Naive thymus-derived CD4-positive, alpha-beta T cell (primary cell): ENCODE measurements at regions of chr13 and their contacts with region 1.

Region 1: GRCh38 chr13:42039946-42040729 is 8.3 kb upstream of the DGKH start:
- DNase-seq: peak; percentile 67 to 87 (median 79)
- ATAC-seq: peak; percentile 92
- H3K4me3 ChIP-seq: peak overlapping the region; percentile 70
- H3K4me3 Mint-ChIP-seq: peak overlapping the region; percentile 83 to 95 (median 90)
- H3K27ac ChIP-seq: peak overlapping the region; percentile 73
- H3K27ac Mint-ChIP-seq: peak overlapping the region; percentile 29 to 91 (median 84)
- H3K4me1 ChIP-seq: peaks cover 7 to 8% of the 10 kb centered on the region in 2 donors
- H3K4me1 Mint-ChIP-seq: peaks cover 7 to 22% (median 20%) of the 10 kb centered on the region in 7 donors
- H3K27me3 ChIP-seq: no peaks in the 10 kb centered on the region
- H3K27me3 Mint-ChIP-seq: peaks cover 0 to 58% (median 0%) of the 10 kb centered on the region in 5 donors

Region 2: GRCh38 chr13:41132512-41133152 is 907.5 kb before region 1 on chr13 and contains the start of gene KBTBD6:
- CTCF ChIA-PET with region 1: interaction called, 3 read pairs
- POLR2A ChIA-PET with region 1: no interaction called
- intact Hi-C with region 1: loop called (anchors 5 kb)
- DNase-seq: peak; percentile 76 to 93 (median 87)
- ATAC-seq: peak; percentile 98
- H3K4me3 ChIP-seq: peak within 1 kb of the TSS; percentile 77
- H3K4me3 Mint-ChIP-seq: peak within 1 kb of the TSS; percentile 94 to 99 (median 98)
- H3K27ac ChIP-seq: peak within 1 kb of the TSS; percentile 67
- H3K27ac Mint-ChIP-seq: peak within 1 kb of the TSS; percentile 91 to 97 (median 93)
- H3K4me1 ChIP-seq: peaks cover 15 to 24% of the 10 kb centered on the region in 2 donors
- H3K4me1 Mint-ChIP-seq: peaks cover 32 to 60% (median 54%) of the 10 kb centered on the region in 7 donors
- H3K27me3 ChIP-seq: no peaks in the 10 kb centered on the region
- H3K27me3 Mint-ChIP-seq: no peaks in the 10 kb centered on the region
- total RNA-seq, gene KBTBD6: 3.9 to 9.2 (median 7.7) TPM

Region 3: DNA sequence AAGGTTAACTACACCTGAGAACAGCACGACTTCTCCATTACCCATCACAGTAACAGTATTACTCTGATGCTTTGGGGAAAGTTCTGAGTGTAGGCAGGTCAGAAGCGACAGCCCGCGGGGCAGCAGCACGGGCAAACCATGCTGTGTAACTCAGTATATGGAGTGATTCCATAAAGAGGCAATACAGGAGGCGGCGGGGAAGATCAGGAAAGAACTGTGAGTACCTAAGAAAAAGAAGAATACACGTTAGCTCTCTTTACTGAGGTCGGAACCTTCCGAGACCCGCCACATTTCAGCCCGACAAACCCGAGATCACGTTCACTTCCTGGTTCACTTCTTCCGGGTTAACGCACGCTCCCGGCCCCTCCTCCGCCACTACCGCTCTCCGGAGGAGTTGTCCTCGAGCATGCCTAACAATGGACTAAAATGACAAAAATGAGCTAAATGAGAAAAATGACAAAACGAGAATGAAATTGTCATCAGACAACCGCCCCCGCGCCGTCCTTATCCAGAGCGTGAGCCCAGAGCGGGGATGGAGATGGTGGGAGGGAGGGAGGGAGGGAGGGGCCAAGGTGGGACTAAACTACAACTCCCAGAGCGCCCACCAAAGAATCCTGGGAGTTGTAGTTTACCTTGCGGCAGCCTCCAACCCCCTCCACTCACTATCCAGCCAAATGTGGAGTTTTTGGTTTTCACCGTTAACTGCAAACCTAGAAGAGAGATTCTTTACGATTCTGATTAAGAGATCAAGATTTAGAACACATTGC is 776.7 kb before region 1 on chr13 and contains the start of gene MTRF1:
- CTCF ChIA-PET with region 1: no interaction called
- POLR2A ChIA-PET with region 1: no interaction called
- intact Hi-C with region 1: loop called in 1 of 2 experiments (anchors 2 kb)
- DNase-seq: peak; percentile 70 to 91 (median 88)
- ATAC-seq: peak; percentile 94
- H3K4me3 ChIP-seq: peak within 1 kb of the TSS; percentile 76
- H3K4me3 Mint-ChIP-seq: peak within 1 kb of the TSS; percentile 84 to 100 (median 96)
- H3K27ac ChIP-seq: peak within 1 kb of the TSS; percentile 79
- H3K27ac Mint-ChIP-seq: peak within 1 kb of the TSS; percentile 92 to 99 (median 96)
- H3K4me1 ChIP-seq: peaks cover 0 to 3% of the 10 kb centered on the region in 2 donors
- H3K4me1 Mint-ChIP-seq: peaks cover 10 to 61% (median 28%) of the 10 kb centered on the region in 7 donors
- H3K27me3 ChIP-seq: no peaks in the 10 kb centered on the region
- H3K27me3 Mint-ChIP-seq: no peaks in the 10 kb centered on the region
- total RNA-seq, gene MTRF1: 21.7 to 38.2 (median 30.9) TPM

Region 4: DNA sequence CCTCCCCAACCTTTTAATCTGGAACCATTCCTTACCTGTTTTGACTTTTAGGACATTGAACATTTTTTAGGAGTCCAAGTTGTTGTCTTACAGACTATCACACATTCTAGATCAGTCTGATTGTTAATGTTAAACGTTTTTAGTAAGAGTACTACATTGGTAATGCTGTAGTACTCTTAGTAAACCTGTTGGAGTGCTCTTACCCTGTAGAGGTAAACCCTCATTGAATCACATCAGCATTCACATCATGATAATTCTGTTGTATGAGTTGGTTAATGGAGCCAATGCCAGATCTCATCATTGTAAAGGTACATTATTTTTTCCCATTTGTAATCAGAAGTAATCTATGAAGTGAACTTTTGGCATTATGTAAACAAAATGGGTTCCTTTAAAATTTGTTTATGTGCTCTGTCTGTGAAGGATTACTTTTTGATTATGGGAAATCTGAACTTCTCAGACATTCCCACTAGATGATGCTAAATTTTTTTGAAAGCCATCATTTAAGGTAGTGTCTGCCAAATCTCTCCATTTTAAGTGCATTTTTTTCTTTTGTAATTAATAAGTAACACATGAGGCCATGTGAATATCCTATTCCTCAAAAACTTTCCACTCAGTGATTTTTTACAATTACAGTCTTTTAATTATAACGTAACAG is 134.4 kb before region 1 on chr13:
- CTCF ChIA-PET with region 1: no interaction called
- POLR2A ChIA-PET with region 1: no interaction called
- intact Hi-C with region 1: loop called in 1 of 2 experiments (anchors 5 kb)
- DNase-seq: peak in 6 of 9 donors; percentile 6 to 45 (median 26)
- ATAC-seq: peak; percentile 92
- H3K4me3 ChIP-seq: no peak overlapping the region
- H3K4me3 Mint-ChIP-seq: no peak overlapping the region
- H3K27ac ChIP-seq: no peak overlapping the region
- H3K27ac Mint-ChIP-seq: no peak overlapping the region
- H3K4me1 ChIP-seq: no peaks in the 10 kb centered on the region
- H3K4me1 Mint-ChIP-seq: peaks cover 0 to 12% (median 3%) of the 10 kb centered on the region in 7 donors
- H3K27me3 ChIP-seq: no peaks in the 10 kb centered on the region
- H3K27me3 Mint-ChIP-seq: no peaks in the 10 kb centered on the region

Region 5: GRCh38 chr13:41916173-41916954 is 123.8 kb before region 1 on chr13:
- CTCF ChIA-PET with region 1: no interaction called
- POLR2A ChIA-PET with region 1: no interaction called
- intact Hi-C with region 1: loop called (anchors 2 to 5 kb)
- DNase-seq: peak in 5 of 9 donors; percentile 15 to 47 (median 30)
- ATAC-seq: peak; percentile 76
- H3K4me3 ChIP-seq: no peak overlapping the region
- H3K4me3 Mint-ChIP-seq: peak overlapping the region in 9 of 10 donors; percentile 26 to 81 (median 57)
- H3K27ac ChIP-seq: no peak overlapping the region
- H3K27ac Mint-ChIP-seq: peak overlapping the region in 7 of 9 donors; percentile 0 to 87 (median 47)
- H3K4me1 ChIP-seq: peaks cover 11 to 15% of the 10 kb centered on the region in 2 donors
- H3K4me1 Mint-ChIP-seq: peaks cover 26 to 65% (median 44%) of the 10 kb centered on the region in 7 donors
- H3K27me3 ChIP-seq: no peaks in the 10 kb centered on the region
- H3K27me3 Mint-ChIP-seq: no peaks in the 10 kb centered on the region

Region 6: DNA sequence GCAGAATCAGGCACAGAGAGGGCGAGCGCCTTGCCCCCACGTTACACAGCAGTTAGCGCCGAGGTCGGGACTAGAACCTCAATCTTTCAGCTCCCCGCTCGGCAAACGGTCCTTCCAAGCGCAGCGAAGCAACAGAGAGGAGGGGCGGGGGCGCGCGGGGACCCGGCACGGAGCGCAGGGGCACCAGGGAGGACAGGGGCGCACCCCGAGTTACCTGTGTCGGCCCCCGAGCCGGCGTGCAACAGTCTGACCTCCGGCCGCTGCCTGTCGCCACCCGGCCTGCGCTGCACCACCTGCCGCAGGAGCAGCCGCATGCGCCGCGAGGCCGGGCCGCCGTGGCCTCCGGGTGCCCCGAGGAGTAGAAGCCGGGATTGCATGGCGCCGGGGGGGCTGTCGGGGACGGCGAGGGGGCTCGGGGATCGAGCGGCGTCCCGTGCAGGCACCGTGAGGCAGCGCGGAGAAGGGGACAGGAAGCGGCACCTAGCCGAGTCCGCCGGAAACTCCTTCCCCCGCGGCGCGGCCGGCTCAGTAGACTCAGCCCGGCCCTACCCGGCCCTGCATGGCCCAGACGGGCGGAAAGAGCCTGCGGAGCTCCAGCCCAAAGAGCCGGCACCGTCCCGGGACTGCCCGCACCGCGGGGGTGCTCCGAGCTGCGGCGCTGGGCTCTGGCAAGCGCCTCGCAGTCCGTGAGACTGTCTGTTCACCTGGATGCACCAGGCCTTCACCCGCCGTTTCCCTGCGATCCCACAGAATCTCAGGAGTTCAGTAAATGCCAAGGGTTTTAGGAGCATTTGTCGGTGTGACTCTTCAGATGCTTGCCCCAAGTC is 79.3 kb before region 1 on chr13 and contains the start of gene VWA8:
- CTCF ChIA-PET with region 1: no interaction called
- POLR2A ChIA-PET with region 1: interaction called, 3 read pairs
- intact Hi-C with region 1: loop called (anchors 1 to 2 kb)
- DNase-seq: peak; percentile 75 to 86 (median 84)
- ATAC-seq: peak; percentile 97
- H3K4me3 ChIP-seq: peak within 1 kb of the TSS; percentile 86
- H3K4me3 Mint-ChIP-seq: peak within 1 kb of the TSS; percentile 92 to 97 (median 94)
- H3K27ac ChIP-seq: peak within 1 kb of the TSS; percentile 84
- H3K27ac Mint-ChIP-seq: peak within 1 kb of the TSS; percentile 88 to 99 (median 95)
- H3K4me1 ChIP-seq: peaks cover 14 to 16% of the 10 kb centered on the region in 2 donors
- H3K4me1 Mint-ChIP-seq: peaks cover 19 to 63% (median 43%) of the 10 kb centered on the region in 7 donors
- H3K27me3 ChIP-seq: no peaks in the 10 kb centered on the region
- H3K27me3 Mint-ChIP-seq: peaks cover 0 to 2% (median 0%) of the 10 kb centered on the region in 5 donors
- total RNA-seq, gene VWA8: 16.8 to 26.3 (median 21.8) TPM

Region 7: DNA sequence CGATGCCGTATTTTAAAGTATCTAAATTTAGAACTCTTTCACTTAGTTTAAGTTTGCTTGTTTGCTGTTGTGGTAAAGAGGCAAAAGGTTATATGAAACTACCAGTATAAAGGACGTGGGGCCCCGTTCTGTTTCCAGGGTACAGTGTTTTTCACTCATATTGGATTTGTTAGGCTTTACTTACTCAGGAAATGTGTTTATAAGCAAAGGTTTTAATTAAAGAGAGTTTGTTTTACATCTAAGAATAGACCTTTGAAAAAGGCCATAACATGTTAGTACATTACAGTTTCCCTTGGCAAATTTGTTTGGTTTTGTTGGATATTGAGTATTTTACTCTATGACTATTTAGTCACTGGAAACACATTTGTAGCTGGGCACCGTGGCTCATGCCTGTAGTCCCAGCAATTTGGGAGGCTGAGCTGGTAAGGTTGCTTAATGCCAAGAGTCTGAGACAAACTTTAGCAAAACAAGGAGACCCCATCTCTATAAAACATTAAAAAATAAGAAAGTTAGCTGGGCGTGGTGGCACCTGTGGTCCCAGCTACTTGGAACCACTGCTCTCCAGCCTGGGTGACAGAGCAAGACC is 15.5 kb after region 1 on chr13:
- CTCF ChIA-PET with region 1: no interaction called
- POLR2A ChIA-PET with region 1: no interaction called
- intact Hi-C with region 1: loop called in 1 of 2 experiments (anchors 2 kb)
- DNase-seq: no peak
- ATAC-seq: no peak
- H3K4me3 ChIP-seq: no peak overlapping the region
- H3K4me3 Mint-ChIP-seq: no peak overlapping the region
- H3K27ac ChIP-seq: no peak overlapping the region
- H3K27ac Mint-ChIP-seq: no peak overlapping the region
- H3K4me1 ChIP-seq: no peaks in the 10 kb centered on the region
- H3K4me1 Mint-ChIP-seq: peaks cover 0 to 41% (median 4%) of the 10 kb centered on the region in 7 donors
- H3K27me3 ChIP-seq: no peaks in the 10 kb centered on the region
- H3K27me3 Mint-ChIP-seq: no peaks in the 10 kb centered on the region

Region 8: GRCh38 chr13:42548731-42549551 is 508.8 kb after region 1 on chr13:
- CTCF ChIA-PET with region 1: no interaction called
- POLR2A ChIA-PET with region 1: no interaction called
- intact Hi-C with region 1: no loop called
- DNase-seq: no peak
- ATAC-seq: peak; percentile 87
- H3K4me3 ChIP-seq: no peak overlapping the region
- H3K4me3 Mint-ChIP-seq: peak overlapping the region in 1 of 10 donors; percentile 27
- H3K27ac ChIP-seq: no peak overlapping the region
- H3K27ac Mint-ChIP-seq: no peak overlapping the region
- H3K4me1 ChIP-seq: no peaks in the 10 kb centered on the region
- H3K4me1 Mint-ChIP-seq: peaks cover 0 to 20% (median 0%) of the 10 kb centered on the region in 7 donors
- H3K27me3 ChIP-seq: no peaks in the 10 kb centered on the region
- H3K27me3 Mint-ChIP-seq: peaks cover 0 to 3% (median 0%) of the 10 kb centered on the region in 5 donors